CD4-positive, alpha-beta memory T cell (primary cell): ENCODE measurements at regions of chr6 and their contacts with region 1.

Region 1: GRCh38 chr6:118709859-118710350 is 58.5 kb upstream of the CEP85L start:
- DNase-seq: peak; percentile 79 to 88 (median 85)
- H3K4me3 ChIP-seq: peak overlapping the region; percentile 95
- H3K4me3 Mint-ChIP-seq: peak overlapping the region; percentile 91 to 99 (median 95)
- H3K27ac ChIP-seq: peak overlapping the region; percentile 70
- H3K27ac Mint-ChIP-seq: peak overlapping the region; percentile 92 to 98 (median 98)
- H3K4me1 ChIP-seq: peaks cover 75% of the 10 kb centered on the region
- H3K4me1 Mint-ChIP-seq: peaks cover 56 to 94% (median 66%) of the 10 kb centered on the region in 4 donors
- H3K27me3 ChIP-seq: no peaks in the 10 kb centered on the region
- H3K27me3 Mint-ChIP-seq: no peaks in the 10 kb centered on the region

Region 2: DNA sequence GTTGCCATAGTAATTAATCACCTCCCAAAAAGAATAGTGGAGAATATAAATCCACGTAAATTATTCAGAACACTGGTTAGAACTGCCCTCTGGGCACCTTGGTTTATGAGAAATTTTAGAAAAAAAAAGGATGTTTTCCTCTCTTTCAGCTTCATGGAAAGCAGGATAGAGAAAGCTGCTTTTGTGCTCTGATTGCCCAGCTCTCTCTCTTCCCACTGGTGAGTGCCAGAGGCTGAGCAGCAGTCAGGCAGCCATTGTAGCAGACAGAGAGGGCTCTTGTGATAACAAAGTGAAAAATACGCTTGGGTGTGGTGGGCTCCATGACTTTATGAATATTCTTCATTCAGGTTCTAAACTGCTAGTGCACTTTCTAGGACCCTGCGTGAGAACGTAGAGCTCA is 776.4 kb before region 1 on chr6:
- CTCF ChIA-PET with region 1: no interaction called
- POLR2A ChIA-PET with region 1: no interaction called
- intact Hi-C with region 1: no loop called
- DNase-seq: no peak
- H3K4me3 ChIP-seq: no peak overlapping the region
- H3K4me3 Mint-ChIP-seq: no peak overlapping the region
- H3K27ac ChIP-seq: no peak overlapping the region
- H3K27ac Mint-ChIP-seq: no peak overlapping the region
- H3K4me1 ChIP-seq: no peaks in the 10 kb centered on the region
- H3K4me1 Mint-ChIP-seq: no peaks in the 10 kb centered on the region
- H3K27me3 ChIP-seq: no peaks in the 10 kb centered on the region
- H3K27me3 Mint-ChIP-seq: peaks cover 2 to 4% of the 10 kb centered on the region in 2 donors

Region 3: DNA sequence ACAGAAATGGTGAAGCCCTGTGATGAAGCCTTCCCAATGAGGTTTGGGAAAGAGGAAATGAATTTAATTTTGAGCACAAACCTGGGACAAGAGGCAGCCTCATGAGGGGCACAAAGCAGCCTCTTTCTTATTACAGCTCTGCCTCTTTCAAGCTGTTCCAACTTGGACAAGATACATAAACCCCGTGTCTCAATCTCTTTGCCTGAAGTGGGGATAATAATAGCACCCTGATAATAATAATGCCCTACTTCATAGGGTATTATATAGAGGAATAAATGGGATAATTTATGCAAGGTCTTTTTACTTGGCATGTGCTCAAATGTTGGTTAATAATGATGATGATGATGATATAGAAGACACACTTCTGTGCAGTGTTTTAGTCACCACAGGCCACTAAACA is 252.9 kb before region 1 on chr6:
- CTCF ChIA-PET with region 1: no interaction called
- POLR2A ChIA-PET with region 1: no interaction called
- intact Hi-C with region 1: no loop called
- DNase-seq: no peak
- H3K4me3 ChIP-seq: no peak overlapping the region
- H3K4me3 Mint-ChIP-seq: no peak overlapping the region
- H3K27ac ChIP-seq: no peak overlapping the region
- H3K27ac Mint-ChIP-seq: no peak overlapping the region
- H3K4me1 ChIP-seq: no peaks in the 10 kb centered on the region
- H3K4me1 Mint-ChIP-seq: no peaks in the 10 kb centered on the region
- H3K27me3 ChIP-seq: no peaks in the 10 kb centered on the region
- H3K27me3 Mint-ChIP-seq: no peaks in the 10 kb centered on the region

Region 4: GRCh38 chr6:118565311-118565960 is 144.5 kb before region 1 on chr6:
- CTCF ChIA-PET with region 1: interaction called, 15 read pairs
- POLR2A ChIA-PET with region 1: interaction called, 13 read pairs
- intact Hi-C with region 1: loop called (anchors 2 kb)
- DNase-seq: peak; percentile 49 to 71 (median 58)
- H3K4me3 ChIP-seq: no peak overlapping the region
- H3K4me3 Mint-ChIP-seq: peak overlapping the region in 1 of 8 donors; percentile 58
- H3K27ac ChIP-seq: no peak overlapping the region
- H3K27ac Mint-ChIP-seq: peak overlapping the region; percentile 7 to 86 (median 64)
- H3K4me1 ChIP-seq: peaks cover 12% of the 10 kb centered on the region
- H3K4me1 Mint-ChIP-seq: peaks cover 20 to 46% (median 27%) of the 10 kb centered on the region in 4 donors
- H3K27me3 ChIP-seq: no peaks in the 10 kb centered on the region
- H3K27me3 Mint-ChIP-seq: no peaks in the 10 kb centered on the region

Region 5: GRCh38 chr6:118660218-118660569 is 49.7 kb before region 1 on chr6:
- CTCF ChIA-PET with region 1: interaction called, 12 read pairs
- POLR2A ChIA-PET with region 1: interaction called, 64 read pairs
- intact Hi-C with region 1: loop called (anchors 1 kb)
- DNase-seq: peak; percentile 67 to 82 (median 69)
- H3K4me3 ChIP-seq: no peak overlapping the region
- H3K4me3 Mint-ChIP-seq: peak overlapping the region in 6 of 8 donors; percentile 46 to 76 (median 55)
- H3K27ac ChIP-seq: no peak overlapping the region
- H3K27ac Mint-ChIP-seq: peak overlapping the region; percentile 68 to 89 (median 84)
- H3K4me1 ChIP-seq: peaks cover 59% of the 10 kb centered on the region
- H3K4me1 Mint-ChIP-seq: peaks cover 49 to 71% (median 59%) of the 10 kb centered on the region in 4 donors
- H3K27me3 ChIP-seq: no peaks in the 10 kb centered on the region
- H3K27me3 Mint-ChIP-seq: no peaks in the 10 kb centered on the region

Region 6: GRCh38 chr6:118724211-118724610 is 14.3 kb after region 1 on chr6:
- CTCF ChIA-PET with region 1: interaction called, 29 read pairs
- POLR2A ChIA-PET with region 1: interaction called, 57 read pairs
- intact Hi-C with region 1: loop called (anchors 1 kb)
- DNase-seq: no peak
- H3K4me3 ChIP-seq: no peak overlapping the region
- H3K4me3 Mint-ChIP-seq: peak overlapping the region in 5 of 8 donors; percentile 7 to 71 (median 59)
- H3K27ac ChIP-seq: no peak overlapping the region
- H3K27ac Mint-ChIP-seq: peak overlapping the region in 4 of 7 donors; percentile 23 to 87 (median 58)
- H3K4me1 ChIP-seq: peaks cover 48% of the 10 kb centered on the region
- H3K4me1 Mint-ChIP-seq: peaks cover 30 to 79% (median 46%) of the 10 kb centered on the region in 4 donors
- H3K27me3 ChIP-seq: no peaks in the 10 kb centered on the region
- H3K27me3 Mint-ChIP-seq: no peaks in the 10 kb centered on the region

Region 7: DNA sequence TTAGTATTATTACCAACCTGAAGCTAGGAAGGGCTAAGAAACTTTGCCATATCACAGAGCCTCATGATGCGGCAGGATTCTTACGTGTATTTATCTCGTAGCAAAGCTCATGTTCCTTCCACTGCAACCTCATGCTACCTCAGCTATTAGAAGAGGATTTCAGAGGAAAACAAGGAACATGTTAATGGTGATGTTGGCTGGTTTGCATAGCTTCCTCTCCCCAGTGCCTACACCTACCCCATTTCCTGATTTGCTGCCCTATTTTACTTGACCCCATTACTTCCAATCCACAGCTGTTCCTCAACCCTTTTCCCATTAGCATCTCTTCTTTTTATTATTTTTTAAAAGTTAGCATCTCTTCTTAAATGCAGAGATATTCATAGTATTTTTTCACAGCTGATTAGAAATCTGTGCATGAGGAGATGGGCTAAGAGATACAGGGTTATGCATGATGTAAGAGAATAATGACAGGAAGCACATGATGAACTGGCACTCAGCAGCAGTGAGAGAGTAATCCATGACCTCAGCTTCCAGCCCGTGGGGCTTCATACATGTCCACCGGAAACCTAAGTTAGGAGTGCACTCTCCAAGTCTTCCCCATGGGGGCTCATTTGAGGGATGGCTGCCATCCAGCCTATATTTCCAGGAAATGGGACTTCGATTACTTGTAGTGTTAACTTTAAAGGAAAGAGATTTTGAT is 78.0 kb after region 1 on chr6:
- CTCF ChIA-PET with region 1: interaction called, 7 read pairs
- POLR2A ChIA-PET with region 1: interaction called, 34 read pairs
- intact Hi-C with region 1: no loop called
- DNase-seq: peak; percentile 38 to 58 (median 54)
- H3K4me3 ChIP-seq: no peak overlapping the region
- H3K4me3 Mint-ChIP-seq: peak overlapping the region in 7 of 8 donors; percentile 8 to 74 (median 59)
- H3K27ac ChIP-seq: peak overlapping the region; percentile 18
- H3K27ac Mint-ChIP-seq: peak overlapping the region; percentile 77 to 97 (median 95)
- H3K4me1 ChIP-seq: peaks cover 29% of the 10 kb centered on the region
- H3K4me1 Mint-ChIP-seq: peaks cover 27 to 40% (median 34%) of the 10 kb centered on the region in 4 donors
- H3K27me3 ChIP-seq: no peaks in the 10 kb centered on the region
- H3K27me3 Mint-ChIP-seq: no peaks in the 10 kb centered on the region

Region 8: DNA sequence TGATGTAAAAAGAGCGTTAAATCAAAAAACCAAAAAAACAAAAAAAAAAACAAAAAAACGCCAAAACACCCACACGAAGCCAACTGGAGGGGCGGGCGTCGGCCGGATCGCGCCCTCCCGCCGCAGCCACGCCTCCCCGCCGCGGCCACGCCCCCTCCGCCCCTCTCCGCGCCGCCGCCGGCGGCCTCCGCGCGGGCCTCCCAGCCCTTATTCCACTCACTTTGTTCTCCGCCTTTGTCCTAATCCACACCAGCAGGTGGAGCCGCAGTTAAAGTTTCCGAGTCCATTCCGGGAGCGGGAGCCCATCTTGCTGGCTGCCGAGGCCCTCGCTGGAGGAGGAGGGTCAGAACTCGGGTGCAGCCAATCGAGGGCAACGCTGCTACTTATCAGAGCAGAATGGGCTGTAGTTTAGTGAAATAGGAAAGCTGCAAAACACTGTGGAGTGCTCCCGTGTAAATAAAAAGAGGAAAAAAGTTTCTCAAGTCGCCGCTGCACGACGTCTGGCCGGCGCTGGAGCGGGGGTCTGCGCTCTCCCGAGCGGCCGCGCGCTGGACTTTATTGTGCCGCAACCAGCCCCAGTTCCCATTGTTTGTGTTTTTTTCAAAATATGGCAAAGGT is 184.0 kb after region 1 on chr6 and contains the start of gene ASF1A:
- CTCF ChIA-PET with region 1: interaction called, 12 read pairs
- POLR2A ChIA-PET with region 1: interaction called, 105 read pairs
- intact Hi-C with region 1: loop called (anchors 1 kb)
- DNase-seq: peak; percentile 97 to 98 (median 97)
- H3K4me3 ChIP-seq: peak within 1 kb of the TSS; percentile 63 to 86
- H3K4me3 Mint-ChIP-seq: peak within 1 kb of the TSS; percentile 89 to 100 (median 96)
- H3K27ac ChIP-seq: peak within 1 kb of the TSS; percentile 83
- H3K27ac Mint-ChIP-seq: peak within 1 kb of the TSS; percentile 96 to 99 (median 98)
- H3K4me1 ChIP-seq: peaks cover 72% of the 10 kb centered on the region
- H3K4me1 Mint-ChIP-seq: peaks cover 48 to 78% (median 57%) of the 10 kb centered on the region in 4 donors
- H3K27me3 ChIP-seq: no peaks in the 10 kb centered on the region
- H3K27me3 Mint-ChIP-seq: peaks cover 0 to 1% of the 10 kb centered on the region in 2 donors
- total RNA-seq, gene ASF1A: 64.0 to 66.6 TPM

Region 9: DNA sequence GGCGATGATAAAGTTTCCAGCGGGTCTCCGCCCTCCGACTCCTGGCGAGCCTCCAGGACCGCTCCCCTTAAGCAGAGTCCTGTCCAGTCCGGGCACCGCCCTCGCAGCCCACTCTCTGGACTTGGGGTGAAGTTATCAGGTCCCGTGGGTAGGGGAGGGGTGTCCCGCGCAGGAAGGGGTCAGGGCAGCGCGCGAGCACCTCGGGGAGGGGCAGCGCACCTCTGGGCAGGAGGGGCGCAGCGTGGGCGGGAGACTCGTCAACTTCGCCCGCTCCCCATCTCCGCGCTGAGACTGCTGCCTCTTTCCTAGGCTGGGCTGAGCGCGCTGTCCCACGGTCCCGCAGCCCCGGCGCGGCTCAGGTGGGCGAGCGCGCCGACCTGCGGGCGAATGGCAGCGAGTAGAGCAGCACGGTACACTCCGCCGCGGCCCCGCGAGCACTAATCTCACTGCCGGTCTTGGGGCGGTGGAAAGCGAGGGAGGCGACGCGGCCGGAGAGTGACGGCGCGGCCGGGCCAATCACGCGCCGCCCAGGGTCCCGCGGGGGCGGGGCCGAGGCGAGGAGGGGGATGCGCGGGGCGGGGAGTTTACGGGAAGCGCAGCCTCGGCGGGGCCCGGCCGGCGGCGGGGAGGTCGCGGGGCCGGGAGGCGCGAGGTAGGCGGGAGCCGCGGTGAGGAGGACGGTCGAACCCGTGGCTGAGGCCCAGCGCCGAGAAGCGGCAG is 639.6 kb after region 1 on chr6 and contains the start of gene MAN1A1:
- CTCF ChIA-PET with region 1: no interaction called
- POLR2A ChIA-PET with region 1: no interaction called
- intact Hi-C with region 1: loop called (anchors 2 kb)
- DNase-seq: peak; percentile 85 to 93 (median 91)
- H3K4me3 ChIP-seq: peak within 1 kb of the TSS; percentile 73 to 81
- H3K4me3 Mint-ChIP-seq: peak within 1 kb of the TSS; percentile 86 to 98 (median 94)
- H3K27ac ChIP-seq: peak within 1 kb of the TSS; percentile 88
- H3K27ac Mint-ChIP-seq: peak within 1 kb of the TSS; percentile 83 to 90 (median 88)
- H3K4me1 ChIP-seq: peaks cover 33% of the 10 kb centered on the region
- H3K4me1 Mint-ChIP-seq: peaks cover 31 to 51% (median 37%) of the 10 kb centered on the region in 4 donors
- H3K27me3 ChIP-seq: no peaks in the 10 kb centered on the region
- H3K27me3 Mint-ChIP-seq: no peaks in the 10 kb centered on the region
- total RNA-seq, gene MAN1A1: 12.3 TPM